A549 (cell line): ENCODE measurements at regions of chrX and their contacts with region 1.

Region 1: DNA sequence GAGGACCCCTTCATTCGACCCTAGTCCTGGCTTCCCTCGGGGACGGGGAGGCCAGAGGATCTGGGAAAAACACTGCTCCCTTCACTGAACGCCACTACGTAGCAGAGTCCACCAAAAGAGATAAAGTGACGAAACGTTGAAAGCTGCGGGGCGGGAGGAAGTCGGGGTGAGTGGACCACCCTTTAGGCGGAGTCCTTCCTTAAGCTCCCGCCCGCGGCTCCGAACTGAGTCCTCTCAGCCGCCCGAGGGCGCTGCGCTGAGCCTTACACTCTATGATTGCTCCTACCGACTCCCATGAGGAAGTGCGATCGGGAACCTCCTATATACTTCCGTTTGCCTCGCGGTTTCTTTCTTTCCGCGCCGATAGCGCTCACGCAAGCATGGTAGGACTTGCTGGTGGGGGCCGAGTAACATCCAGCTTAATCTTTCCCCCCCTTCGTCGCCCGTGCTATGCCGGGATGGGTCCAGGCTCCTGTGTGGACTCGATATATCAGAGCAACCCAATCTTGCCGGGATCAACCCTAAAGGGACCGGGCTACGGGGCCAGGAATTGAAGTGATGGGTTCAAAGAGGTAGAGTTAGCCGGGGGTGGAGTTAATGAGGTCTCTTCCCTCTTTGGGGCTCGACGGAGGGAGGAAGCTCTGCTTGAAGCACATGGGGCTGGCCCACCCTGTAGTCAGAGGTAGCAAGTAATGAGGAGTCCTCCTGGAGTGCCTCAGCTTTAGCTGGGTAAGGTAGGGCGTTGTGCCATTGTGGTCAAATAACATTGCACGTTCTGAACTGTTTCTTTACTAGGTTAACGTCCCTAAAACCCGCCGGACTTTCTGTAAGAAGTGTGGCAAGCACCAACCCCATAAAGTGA is at the start of gene RPL36A:
- DNase-seq: peak; percentile 89 to 94
- ATAC-seq: peak; percentile 94 to 96
- H3K4me3 ChIP-seq: peak within 1 kb of the TSS; percentile 85
- H3K27ac ChIP-seq: peak within 1 kb of the TSS; percentile 87 to 95
- H3K4me1 ChIP-seq: peaks cover 22% of the 10 kb centered on the region
- CTCF ChIP-seq: peak; percentile 67
- EP300 ChIP-seq: no peak
- POLR2A ChIP-seq: peak; percentile 93
- RAD21 ChIP-seq: 0 out of 5 replicates have a peak, but pooled peaks of 1 of the 2 experiments have one; percentile 4
- polyA plus RNA-seq, gene RPL36A: 2,853 and 3,171 TPM in 2 replicates

Region 2: DNA sequence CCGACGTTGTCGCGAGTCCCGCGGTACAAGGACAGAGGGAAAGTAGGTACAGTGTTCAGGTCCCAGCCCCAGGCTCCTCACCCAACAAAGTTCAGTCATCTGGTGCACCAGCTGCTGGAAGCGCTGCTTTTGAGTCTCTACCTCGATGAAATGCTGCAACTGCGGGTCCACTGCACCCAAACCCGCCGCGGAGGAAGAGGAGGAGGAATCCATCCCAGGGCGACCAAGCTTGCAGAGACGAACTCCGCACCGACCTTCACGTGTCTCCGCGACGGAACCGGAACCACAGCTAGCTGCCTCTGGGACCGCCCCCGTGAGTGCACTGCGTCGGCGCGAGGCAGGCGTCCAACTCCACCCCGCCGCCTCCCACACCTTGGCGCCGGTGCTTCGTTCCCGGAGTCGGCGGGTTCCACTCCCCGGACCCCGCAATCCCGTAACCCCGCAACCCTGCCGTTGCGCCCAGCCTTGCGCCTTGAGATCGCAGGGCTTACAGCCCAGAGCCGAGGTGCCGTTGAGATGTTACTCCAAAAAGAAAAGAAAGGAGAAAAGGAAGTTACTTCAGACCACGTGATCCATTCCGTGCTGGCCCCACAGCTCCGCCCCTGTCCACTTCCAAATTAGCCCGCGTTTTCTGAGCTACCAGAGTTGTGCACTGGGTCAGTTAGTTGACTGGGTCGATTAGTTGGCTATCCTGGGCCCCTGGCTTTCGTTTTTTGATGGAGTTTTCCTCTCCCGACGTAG is 42.3 kb before region 1 on chrX and contains the start of gene TIMM8A:
- CTCF ChIA-PET with region 1: interaction called, 6 read pairs
- POLR2A ChIA-PET with region 1: interaction called, 46 read pairs
- DNase-seq: peak; percentile 82
- ATAC-seq: peak; percentile 99
- H3K4me3 ChIP-seq: peak within 1 kb of the TSS; percentile 85
- H3K27ac ChIP-seq: peak within 1 kb of the TSS; percentile 98 to 99
- H3K4me1 ChIP-seq: peaks cover 16% of the 10 kb centered on the region
- CTCF ChIP-seq: no peak
- EP300 ChIP-seq: no peak
- POLR2A ChIP-seq: peak; percentile 95
- RAD21 ChIP-seq: no peak
- polyA plus RNA-seq, gene TIMM8A: 22.2 and 24.5 TPM in 2 replicates

Region 3: GRCh38 chrX:101370888-101371504 is 19.9 kb before region 1 on chrX:
- CTCF ChIA-PET with region 1: no interaction called
- POLR2A ChIA-PET with region 1: interaction called, 10 read pairs
- DNase-seq: no peak
- ATAC-seq: no peak
- H3K4me3 ChIP-seq: no peak overlapping the region
- H3K27ac ChIP-seq: no peak overlapping the region
- H3K4me1 ChIP-seq: no peaks in the 10 kb centered on the region
- CTCF ChIP-seq: no peak
- EP300 ChIP-seq: no peak
- POLR2A ChIP-seq: no peak
- RAD21 ChIP-seq: no peak

Region 4: GRCh38 chrX:101377547-101377946 is 13.3 kb before region 1 on chrX:
- CTCF ChIA-PET with region 1: interaction called, 7 read pairs
- POLR2A ChIA-PET with region 1: interaction called, 12 read pairs
- DNase-seq: no peak
- ATAC-seq: no peak
- H3K4me3 ChIP-seq: no peak overlapping the region
- H3K27ac ChIP-seq: no peak overlapping the region
- H3K4me1 ChIP-seq: no peaks in the 10 kb centered on the region
- CTCF ChIP-seq: no peak
- EP300 ChIP-seq: no peak
- POLR2A ChIP-seq: no peak
- RAD21 ChIP-seq: no peak

Region 5: DNA sequence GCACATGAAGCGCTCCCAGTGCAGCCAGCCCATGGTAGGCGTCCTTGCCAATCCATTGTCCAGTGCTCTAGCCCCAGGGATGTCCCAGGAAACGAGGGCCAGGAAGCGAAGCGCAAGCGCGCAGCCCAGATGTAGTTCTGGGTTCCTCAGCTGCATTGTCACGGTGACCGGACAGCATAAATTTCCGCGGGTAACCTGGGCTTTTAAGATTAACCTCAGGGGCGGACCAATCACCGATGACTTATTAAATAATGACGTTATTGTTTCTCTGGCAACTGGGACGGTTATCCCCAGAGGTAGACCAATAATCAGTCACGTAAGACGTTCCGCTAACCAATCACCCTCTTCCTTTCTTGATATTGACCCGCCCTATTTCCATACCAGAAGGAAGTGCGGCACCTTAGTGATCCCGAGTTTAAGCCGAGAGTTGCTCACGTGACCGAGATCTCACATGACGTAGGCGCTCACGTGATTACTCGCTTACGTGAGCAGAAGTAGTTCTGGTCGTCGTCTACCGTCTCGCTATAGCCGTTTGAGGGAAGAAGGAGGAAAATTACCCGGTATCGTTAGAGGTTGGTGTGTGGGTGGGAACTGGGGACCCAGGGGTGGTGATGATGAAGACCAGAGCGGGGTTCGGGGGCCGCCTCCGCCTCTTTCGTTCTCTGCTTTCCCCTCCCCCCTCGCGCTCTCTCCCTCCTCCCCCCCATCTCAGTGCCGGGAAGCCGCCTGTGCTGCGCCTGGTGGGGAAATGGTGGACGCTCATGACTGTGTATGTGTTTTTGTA is 17.0 kb after region 1 on chrX and contains the starts of genes GLA and HNRNPH2:
- CTCF ChIA-PET with region 1: interaction called, 25 read pairs
- POLR2A ChIA-PET with region 1: interaction called, 11 read pairs
- DNase-seq: peak; percentile 83 to 99
- ATAC-seq: peak; percentile 91 to 92
- H3K4me3 ChIP-seq: peak within 1 kb of the TSS; percentile 76
- H3K27ac ChIP-seq: peak within 1 kb of the TSS; percentile 88 to 94
- H3K4me1 ChIP-seq: peaks cover 17% of the 10 kb centered on the region; the same call in 2 of the 3 replicates
- CTCF ChIP-seq: no peak
- EP300 ChIP-seq: no peak
- POLR2A ChIP-seq: peak; percentile 82
- RAD21 ChIP-seq: no peak
- polyA plus RNA-seq, gene GLA: 184 and 186 TPM in 2 replicates
- polyA plus RNA-seq, gene HNRNPH2: 50.1 and 55.4 TPM in 2 replicates

Region 6: GRCh38 chrX:101430457-101431078 is 39.7 kb after region 1 on chrX:
- CTCF ChIA-PET with region 1: no interaction called
- POLR2A ChIA-PET with region 1: no interaction called
- DNase-seq: peak in 1 of 2 experiments; percentile 12
- ATAC-seq: peak in 1 of 2 experiments; percentile 60; a peak in 3 of 6 replicates
- H3K4me3 ChIP-seq: no peak overlapping the region
- H3K27ac ChIP-seq: 0 out of 6 replicates have a peak overlapping the region, but pooled peaks of 1 of the 2 experiments have one; percentile 44
- H3K4me1 ChIP-seq: peaks cover 14% of the 10 kb centered on the region
- CTCF ChIP-seq: no peak
- EP300 ChIP-seq: no peak
- POLR2A ChIP-seq: no peak
- RAD21 ChIP-seq: no peak